ENCODE measurements at regions of chr5 and their contacts with region 1.

Region 1: GRCh38 chr5:22388855-22389254 is 464.3 kb downstream of the CDH12 start:
- DNase-seq: no peak
- H3K4me3 ChIP-seq: no peak overlapping the region
- H3K27ac ChIP-seq: no peak overlapping the region
- H3K4me1 ChIP-seq: no peaks in the 10 kb centered on the region
- H3K27me3 ChIP-seq: no peaks in the 10 kb centered on the region
- CTCF ChIP-seq: no peak
- POLR2A ChIP-seq: no peak

Region 2: DNA sequence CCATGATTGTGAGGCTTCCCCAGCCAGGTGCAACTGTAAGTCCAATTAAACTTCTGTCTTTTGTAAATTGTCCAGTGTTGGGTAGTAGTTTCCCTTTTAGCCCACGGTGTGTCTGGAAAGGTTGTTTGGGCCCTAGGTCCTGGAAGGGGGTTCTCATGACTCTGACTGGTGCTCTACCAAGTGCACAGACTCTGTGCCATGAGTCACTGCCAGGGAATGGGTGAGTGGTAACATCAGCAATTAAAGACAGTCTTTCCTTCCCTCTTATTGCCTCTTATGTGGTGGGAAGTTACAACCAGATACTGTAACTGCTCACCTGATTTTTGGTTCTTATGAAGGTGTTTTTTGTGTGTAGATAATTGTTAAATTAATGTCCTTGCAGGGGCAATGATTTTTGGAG is 1259.8 kb after region 1 on chr5:
- CTCF ChIA-PET with region 1: no interaction called
- POLR2A ChIA-PET with region 1: interaction called, 10 read pairs
- dilution Hi-C with region 1: no loop called
- intact Hi-C with region 1: no loop called
- DNase-seq: no peak
- H3K4me3 ChIP-seq: no peak overlapping the region
- H3K27ac ChIP-seq: no peak overlapping the region
- H3K4me1 ChIP-seq: no peaks in the 10 kb centered on the region
- H3K27me3 ChIP-seq: no peaks in the 10 kb centered on the region
- CTCF ChIP-seq: no peak
- POLR2A ChIP-seq: no peak

Measured in endothelial cell of umbilical vein (primary cell).